Right lobe of liver (tissue), 6 donors: ENCODE measurements at regions of chr7 and their contacts with region 1.

Region 1: DNA sequence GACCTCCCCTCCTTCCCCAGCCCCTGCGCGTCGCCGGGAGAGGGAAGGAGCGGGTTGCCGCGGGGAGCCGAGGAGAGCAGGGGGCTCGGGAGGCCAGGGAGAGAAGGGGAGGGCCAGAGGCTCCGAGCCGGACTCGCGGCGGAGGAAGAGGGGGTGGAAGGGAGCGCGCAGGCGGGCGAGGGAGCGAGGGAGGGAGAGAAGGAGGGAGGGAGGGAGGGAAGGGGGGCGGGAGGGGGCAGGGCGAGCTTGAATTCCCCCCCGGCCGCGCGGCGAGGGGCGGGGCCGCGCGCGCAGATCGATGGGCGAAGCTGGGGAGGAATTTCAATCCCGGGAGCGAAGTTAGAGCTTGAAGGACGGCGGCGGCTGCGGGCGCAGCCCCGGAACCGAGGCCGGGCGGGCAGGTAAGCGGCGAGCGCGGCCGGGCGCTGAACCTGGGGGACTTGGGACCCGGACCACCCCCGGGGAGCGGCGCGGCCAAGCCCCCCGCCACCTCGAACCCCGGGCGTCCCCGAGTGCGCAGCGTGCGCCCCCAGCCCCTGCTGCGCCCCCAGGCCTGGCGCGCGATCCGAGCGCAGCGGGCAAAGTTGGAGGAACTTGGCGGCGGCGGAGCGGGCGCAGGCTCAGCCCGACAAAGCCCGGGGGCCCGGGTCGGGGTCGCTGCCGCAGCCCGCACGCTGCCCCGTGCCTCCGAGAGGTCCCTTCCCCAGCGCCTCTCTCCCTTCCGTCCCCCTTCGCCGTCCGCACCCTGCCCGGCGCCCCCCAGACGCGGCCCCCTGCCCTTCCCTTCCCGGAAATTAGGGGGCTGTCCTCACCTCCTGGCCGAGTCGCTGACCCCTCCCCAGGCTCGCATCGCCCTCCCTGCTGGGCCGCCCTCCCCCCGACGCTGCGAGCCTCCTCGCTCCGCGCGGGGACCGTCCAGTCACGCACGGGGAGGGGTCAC is at the start of gene ELFN1:
- DNase-seq: peak; percentile 62 to 83 (median 77)
- ATAC-seq: peak; percentile 13 to 37 (median 32)
- H3K4me3 ChIP-seq: peak within 1 kb of the TSS; percentile 51 to 69 (median 64)
- H3K27ac ChIP-seq: peak within 1 kb of the TSS in 2 of 3 donors; percentile 68 to 74
- H3K4me1 ChIP-seq: peaks cover 0 to 35% (median 9%) of the 10 kb centered on the region in 4 donors
- H3K27me3 ChIP-seq: no peaks in the 10 kb centered on the region
- CTCF ChIP-seq: no peak
- POLR2A ChIP-seq: peak; percentile 71
- total RNA-seq, gene ELFN1: 5.4 to 13.0 (median 7.5) TPM

Region 2: GRCh38 chr7:1709900-1710299 is 39.7 kb after region 1 on chr7:
- intact Hi-C with region 1: loop called in 1 of 2 experiments (anchors 5 kb)
- DNase-seq: no peak
- ATAC-seq: no peak
- H3K4me3 ChIP-seq: no peak overlapping the region
- H3K27ac ChIP-seq: no peak overlapping the region
- H3K4me1 ChIP-seq: peaks cover 0 to 41% (median 15%) of the 10 kb centered on the region in 4 donors
- H3K27me3 ChIP-seq: no peaks in the 10 kb centered on the region
- CTCF ChIP-seq: peak; percentile 21 to 48 (median 38)
- POLR2A ChIP-seq: no peak

Region 3: GRCh38 chr7:1733206-1733907 is 63.1 kb after region 1 on chr7:
- intact Hi-C with region 1: no loop called
- DNase-seq: no peak
- ATAC-seq: no peak
- H3K4me3 ChIP-seq: no peak overlapping the region
- H3K27ac ChIP-seq: no peak overlapping the region
- H3K4me1 ChIP-seq: no peaks in the 10 kb centered on the region
- H3K27me3 ChIP-seq: no peaks in the 10 kb centered on the region
- CTCF ChIP-seq: no peak
- POLR2A ChIP-seq: no peak

Region 4: DNA sequence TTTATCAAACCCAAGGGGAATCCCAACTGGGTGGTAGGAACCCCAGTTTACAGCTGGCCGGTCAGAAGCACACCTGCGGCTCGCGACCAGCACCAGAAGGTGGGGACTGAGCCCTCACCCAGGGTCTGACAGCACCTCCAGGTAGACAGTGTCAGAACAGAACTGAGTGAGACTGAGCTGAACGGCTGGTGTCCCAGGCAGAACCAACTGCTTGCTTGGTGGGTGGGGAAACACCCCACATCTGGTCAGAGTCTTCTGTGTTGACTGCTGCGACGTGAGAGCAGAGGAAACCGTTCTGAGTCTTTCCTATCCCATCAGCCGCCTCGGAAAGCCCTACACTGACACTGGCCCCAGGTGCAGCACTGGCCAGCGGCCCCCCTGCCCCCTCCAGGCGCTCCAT is 401.8 kb after region 1 on chr7:
- intact Hi-C with region 1: no loop called
- DNase-seq: no peak
- ATAC-seq: no peak
- H3K4me3 ChIP-seq: no peak overlapping the region
- H3K27ac ChIP-seq: no peak overlapping the region
- H3K4me1 ChIP-seq: no peaks in the 10 kb centered on the region
- H3K27me3 ChIP-seq: no peaks in the 10 kb centered on the region
- CTCF ChIP-seq: no peak
- POLR2A ChIP-seq: no peak